Natural killer cell (primary cell): ENCODE measurements at regions of chr11 and their contacts with region 1.

Region 1: GRCh38 chr11:122717264-122717867 is 61.8 kb downstream of the UBASH3B start:
- DNase-seq: peak; percentile 52 to 61
- ATAC-seq: peak; percentile 82 to 89 (median 88)
- H3K4me3 ChIP-seq: no peak overlapping the region
- H3K4me3 Mint-ChIP-seq: peak overlapping the region; percentile 69
- H3K27ac ChIP-seq: peak overlapping the region; percentile 66
- H3K27ac Mint-ChIP-seq: peak overlapping the region; percentile 87 to 92
- H3K4me1 ChIP-seq: peaks cover 49% of the 10 kb centered on the region
- H3K4me1 Mint-ChIP-seq: peaks cover 65 to 76% of the 10 kb centered on the region in 2 donors
- H3K27me3 ChIP-seq: no peaks in the 10 kb centered on the region
- H3K27me3 Mint-ChIP-seq: no peaks in the 10 kb centered on the region
- CTCF ChIP-seq: no peak

Region 2: DNA sequence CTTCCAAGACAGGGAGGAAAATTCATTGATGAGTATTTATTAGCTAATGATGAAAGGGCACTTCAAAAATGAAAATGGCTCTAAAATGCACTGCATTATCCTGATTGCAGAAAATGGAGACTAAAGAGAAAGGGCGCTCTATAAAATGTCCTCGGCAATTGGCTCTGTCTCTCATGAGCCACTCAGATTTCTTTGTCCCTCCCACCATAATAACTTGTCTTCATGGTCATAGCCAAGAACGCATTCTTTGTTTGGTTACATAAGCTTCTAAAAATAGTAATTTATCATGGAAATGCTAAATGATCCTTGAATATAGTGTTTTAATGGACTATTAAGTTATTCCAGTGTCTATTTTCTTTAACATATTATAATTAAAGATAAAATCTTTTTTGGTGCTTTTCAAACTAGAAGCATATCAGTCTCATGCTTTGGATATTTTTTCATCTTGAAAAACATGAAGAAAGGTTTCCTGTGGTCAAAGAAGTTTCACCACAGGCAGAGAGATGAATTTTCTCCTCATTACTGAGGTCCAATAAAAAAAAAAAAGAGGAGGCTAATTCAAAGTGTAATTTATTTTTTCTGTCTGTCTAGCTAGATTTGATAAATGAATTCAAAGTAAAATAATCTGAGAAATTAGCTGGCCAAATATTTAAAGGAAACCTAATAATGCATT is 363.2 kb before region 1 on chr11:
- intact Hi-C with region 1: no loop called
- DNase-seq: no peak
- ATAC-seq: no peak
- H3K4me3 ChIP-seq: no peak overlapping the region
- H3K4me3 Mint-ChIP-seq: no peak overlapping the region
- H3K27ac ChIP-seq: no peak overlapping the region
- H3K27ac Mint-ChIP-seq: no peak overlapping the region
- H3K4me1 ChIP-seq: no peaks in the 10 kb centered on the region
- H3K4me1 Mint-ChIP-seq: no peaks in the 10 kb centered on the region
- H3K27me3 ChIP-seq: no peaks in the 10 kb centered on the region
- H3K27me3 Mint-ChIP-seq: peaks cover 0 to 2% of the 10 kb centered on the region in 2 donors
- CTCF ChIP-seq: no peak

Region 3: DNA sequence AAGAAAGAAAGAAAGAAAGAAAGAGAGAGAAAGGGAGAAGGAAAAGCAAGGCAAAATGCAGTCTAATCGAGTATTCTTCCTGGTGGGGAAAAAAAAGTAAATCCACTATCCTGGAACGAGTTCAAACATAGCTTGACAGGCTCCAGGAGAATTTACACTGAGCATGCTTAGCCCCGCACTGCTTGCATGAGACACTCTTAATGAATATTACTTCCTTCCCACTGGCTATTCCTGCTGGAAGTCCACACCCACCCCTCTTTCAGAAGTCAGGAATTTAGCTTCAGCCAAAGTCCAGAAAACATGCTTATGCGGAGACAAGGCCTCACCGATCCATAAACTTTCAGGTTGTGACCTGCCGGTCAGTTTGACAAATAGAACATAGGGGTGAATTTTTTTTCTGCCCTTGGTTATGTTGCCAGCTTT is 349.5 kb before region 1 on chr11:
- intact Hi-C with region 1: no loop called
- DNase-seq: no peak
- ATAC-seq: no peak
- H3K4me3 ChIP-seq: no peak overlapping the region
- H3K4me3 Mint-ChIP-seq: no peak overlapping the region
- H3K27ac ChIP-seq: no peak overlapping the region
- H3K27ac Mint-ChIP-seq: no peak overlapping the region
- H3K4me1 ChIP-seq: no peaks in the 10 kb centered on the region
- H3K4me1 Mint-ChIP-seq: no peaks in the 10 kb centered on the region
- H3K27me3 ChIP-seq: no peaks in the 10 kb centered on the region
- H3K27me3 Mint-ChIP-seq: peaks cover 0 to 3% of the 10 kb centered on the region in 2 donors
- CTCF ChIP-seq: no peak

Region 4: DNA sequence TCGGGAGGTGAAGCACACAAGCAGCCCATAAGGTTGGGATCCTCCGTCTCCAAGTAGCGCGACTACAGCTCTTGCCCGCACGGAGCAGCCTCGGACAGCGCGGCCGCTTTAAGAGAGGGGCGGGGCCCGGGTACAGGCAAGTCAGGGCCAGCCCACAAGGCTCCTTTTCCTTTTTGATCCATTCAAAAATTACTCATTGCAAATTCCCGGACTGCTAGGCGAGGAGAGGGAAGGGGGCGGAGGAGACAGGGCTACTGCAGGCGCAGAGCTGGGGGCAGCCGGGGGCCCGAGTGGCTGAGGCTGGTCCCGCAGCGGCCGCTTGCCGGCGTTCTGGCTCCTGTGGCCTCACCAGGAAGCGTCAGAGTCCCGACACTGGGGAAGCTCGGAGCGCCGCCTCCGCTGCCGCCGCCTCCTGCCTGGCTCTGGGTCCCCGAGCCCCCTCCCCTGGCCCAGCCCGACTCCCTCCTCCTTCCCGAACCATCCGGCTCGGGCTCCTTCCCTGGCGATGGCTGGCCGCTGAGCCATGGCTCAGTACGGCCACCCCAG is 61.8 kb before region 1 on chr11 and contains the start of gene UBASH3B:
- intact Hi-C with region 1: loop called (anchors 2 kb)
- DNase-seq: peak; percentile 51 to 72
- ATAC-seq: peak; percentile 74 to 81 (median 77)
- H3K4me3 ChIP-seq: peak within 1 kb of the TSS; percentile 72
- H3K4me3 Mint-ChIP-seq: peak within 1 kb of the TSS; percentile 96
- H3K27ac ChIP-seq: peak within 1 kb of the TSS; percentile 61
- H3K27ac Mint-ChIP-seq: peak within 1 kb of the TSS; percentile 79 to 88
- H3K4me1 ChIP-seq: peaks cover 39% of the 10 kb centered on the region
- H3K4me1 Mint-ChIP-seq: peaks cover 40 to 46% of the 10 kb centered on the region in 2 donors
- H3K27me3 ChIP-seq: no peaks in the 10 kb centered on the region
- H3K27me3 Mint-ChIP-seq: peaks cover 0 to 13% of the 10 kb centered on the region in 2 donors
- CTCF ChIP-seq: no peak
- total RNA-seq, gene UBASH3B: 28.7 to 33.9 (median 33.5) TPM

Region 5: DNA sequence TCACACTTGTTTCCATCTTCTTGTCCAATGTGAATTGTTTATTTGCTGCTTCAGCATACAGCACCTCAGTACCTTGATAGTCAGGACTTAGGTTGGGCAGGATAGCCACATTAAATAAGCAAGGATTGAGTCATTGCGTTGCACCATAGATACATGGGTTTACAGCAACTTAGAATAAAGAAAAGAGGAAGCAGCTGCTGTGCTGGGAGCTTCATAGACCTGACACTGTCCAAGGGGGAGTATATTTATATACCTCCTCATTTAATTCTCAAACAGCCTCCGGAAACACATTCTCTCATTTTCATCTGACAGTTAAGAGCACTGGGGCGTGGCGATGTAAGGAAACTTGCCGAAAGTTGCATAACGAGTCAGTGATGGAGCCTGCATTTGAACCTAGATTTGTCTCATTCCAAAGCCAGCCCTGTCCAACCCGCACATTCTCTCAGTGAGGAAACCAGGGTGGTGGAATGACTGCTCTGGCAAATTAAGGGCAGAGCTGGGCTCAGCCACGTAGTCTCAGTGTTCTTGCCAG is 19.7 kb before region 1 on chr11:
- intact Hi-C with region 1: loop called (anchors 2 kb)
- DNase-seq: peak in 1 of 2 donors; percentile 71
- ATAC-seq: peak; percentile 57 to 77 (median 67)
- H3K4me3 ChIP-seq: no peak overlapping the region
- H3K4me3 Mint-ChIP-seq: peak overlapping the region; percentile 73
- H3K27ac ChIP-seq: peak overlapping the region; percentile 76
- H3K27ac Mint-ChIP-seq: peak overlapping the region; percentile 65 to 85
- H3K4me1 ChIP-seq: peaks cover 43% of the 10 kb centered on the region
- H3K4me1 Mint-ChIP-seq: peaks cover 35 to 46% of the 10 kb centered on the region in 2 donors
- H3K27me3 ChIP-seq: no peaks in the 10 kb centered on the region
- H3K27me3 Mint-ChIP-seq: no peaks in the 10 kb centered on the region
- CTCF ChIP-seq: no peak

Region 6: DNA sequence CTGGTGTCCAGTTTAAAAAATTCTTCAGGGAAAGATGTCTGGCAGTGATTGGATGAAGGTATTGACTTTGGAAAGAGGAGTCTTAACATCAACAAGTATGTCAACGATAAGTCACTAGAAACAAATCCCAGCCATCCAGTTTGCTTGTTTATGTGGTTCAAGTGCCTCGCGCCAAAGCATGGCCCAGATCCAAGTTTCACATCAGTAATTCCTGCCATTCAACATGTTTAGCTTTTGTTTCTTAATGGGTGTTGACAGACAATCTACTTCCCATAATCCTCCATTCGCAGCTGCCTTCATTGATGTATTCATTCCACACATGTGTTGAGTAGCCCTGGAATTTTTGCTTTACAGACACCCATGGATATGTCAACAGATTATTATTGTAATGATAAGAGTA is 16.0 kb after region 1 on chr11:
- intact Hi-C with region 1: no loop called
- DNase-seq: no peak
- ATAC-seq: no peak
- H3K4me3 ChIP-seq: no peak overlapping the region
- H3K4me3 Mint-ChIP-seq: no peak overlapping the region
- H3K27ac ChIP-seq: no peak overlapping the region
- H3K27ac Mint-ChIP-seq: no peak overlapping the region
- H3K4me1 ChIP-seq: peaks cover 33% of the 10 kb centered on the region
- H3K4me1 Mint-ChIP-seq: peaks cover 39 to 47% of the 10 kb centered on the region in 2 donors
- H3K27me3 ChIP-seq: no peaks in the 10 kb centered on the region
- H3K27me3 Mint-ChIP-seq: no peaks in the 10 kb centered on the region
- CTCF ChIP-seq: no peak

Region 7: GRCh38 chr11:122749005-122749687 is 31.8 kb after region 1 on chr11:
- intact Hi-C with region 1: loop called (anchors 1 kb)
- DNase-seq: peak in 1 of 2 donors; percentile 63
- ATAC-seq: peak; percentile 65 to 82 (median 70)
- H3K4me3 ChIP-seq: no peak overlapping the region
- H3K4me3 Mint-ChIP-seq: peak overlapping the region; percentile 22
- H3K27ac ChIP-seq: no peak overlapping the region
- H3K27ac Mint-ChIP-seq: peak overlapping the region in 1 of 2 donors; percentile 71
- H3K4me1 ChIP-seq: peaks cover 59% of the 10 kb centered on the region
- H3K4me1 Mint-ChIP-seq: peaks cover 28 to 31% of the 10 kb centered on the region in 2 donors
- H3K27me3 ChIP-seq: no peaks in the 10 kb centered on the region
- H3K27me3 Mint-ChIP-seq: no peaks in the 10 kb centered on the region
- CTCF ChIP-seq: no peak

Region 8: GRCh38 chr11:122954455-122954854 is 237.1 kb after region 1 on chr11:
- intact Hi-C with region 1: no loop called
- DNase-seq: no peak
- ATAC-seq: no peak
- H3K4me3 ChIP-seq: no peak overlapping the region
- H3K4me3 Mint-ChIP-seq: no peak overlapping the region
- H3K27ac ChIP-seq: no peak overlapping the region
- H3K27ac Mint-ChIP-seq: no peak overlapping the region
- H3K4me1 ChIP-seq: no peaks in the 10 kb centered on the region
- H3K4me1 Mint-ChIP-seq: peaks cover under 1 to 6% of the 10 kb centered on the region in 2 donors
- H3K27me3 ChIP-seq: no peaks in the 10 kb centered on the region
- H3K27me3 Mint-ChIP-seq: peaks cover 0 to 9% of the 10 kb centered on the region in 2 donors
- CTCF ChIP-seq: no peak